ENCODE measurements at regions of chr4 and their contacts with region 1.

Region 1: GRCh38 chr4:121192480-121192879 is 28.4 kb upstream of the TNIP3 start:
- DNase-seq: peak; percentile 37
- H3K4me3 Mint-ChIP-seq: peak overlapping the region; percentile 9
- H3K27ac Mint-ChIP-seq: no peak overlapping the region
- H3K4me1 Mint-ChIP-seq: peaks cover 44% of the 10 kb centered on the region
- H3K27me3 Mint-ChIP-seq: no peaks in the 10 kb centered on the region

Region 2: GRCh38 chr4:120524237-120524636 is 668.2 kb before region 1 on chr4:
- CTCF ChIA-PET with region 1: no interaction called
- intact Hi-C with region 1: no loop called
- DNase-seq: no peak
- H3K4me3 Mint-ChIP-seq: no peak overlapping the region
- H3K27ac Mint-ChIP-seq: no peak overlapping the region
- H3K4me1 Mint-ChIP-seq: no peaks in the 10 kb centered on the region
- H3K27me3 Mint-ChIP-seq: no peaks in the 10 kb centered on the region

Region 3: DNA sequence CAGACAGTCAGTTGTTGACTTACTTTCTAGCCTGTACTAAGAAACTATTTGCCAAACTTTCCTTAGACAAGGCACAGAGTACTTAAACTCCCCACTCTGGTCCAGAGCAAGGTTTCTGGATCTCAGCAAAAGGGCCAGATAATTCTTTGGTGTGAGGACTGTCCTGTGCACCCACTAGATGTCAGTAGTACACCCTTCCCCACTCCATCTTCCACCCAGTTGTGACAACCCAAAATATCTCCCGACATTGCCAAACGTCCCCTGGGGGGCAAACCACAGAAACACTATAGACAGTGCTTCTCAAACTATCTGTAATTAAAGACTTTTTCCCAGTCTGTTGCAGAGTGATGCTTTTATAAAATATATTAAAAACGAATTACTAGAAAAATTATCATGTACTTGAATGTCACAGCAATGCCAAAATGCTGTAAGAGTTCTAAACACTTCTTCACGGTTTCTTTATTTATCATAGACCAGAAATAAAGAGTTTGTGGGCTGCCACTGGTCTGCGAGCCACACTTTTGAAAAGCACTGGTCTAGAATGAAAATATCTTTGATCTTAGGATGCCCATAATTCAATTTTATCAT is 473.4 kb before region 1 on chr4:
- CTCF ChIA-PET with region 1: no interaction called
- intact Hi-C with region 1: loop called (anchors 5 kb)
- DNase-seq: peak; percentile 37
- H3K4me3 Mint-ChIP-seq: no peak overlapping the region
- H3K27ac Mint-ChIP-seq: no peak overlapping the region
- H3K4me1 Mint-ChIP-seq: no peaks in the 10 kb centered on the region
- H3K27me3 Mint-ChIP-seq: peaks cover 2% of the 10 kb centered on the region

Region 4: GRCh38 chr4:121156822-121157769 is 35.4 kb before region 1 on chr4:
- CTCF ChIA-PET with region 1: interaction called, 19 read pairs
- intact Hi-C with region 1: loop called (anchors 1 kb)
- DNase-seq: peak; percentile 42
- H3K4me3 Mint-ChIP-seq: peak overlapping the region; percentile 78
- H3K27ac Mint-ChIP-seq: no peak overlapping the region
- H3K4me1 Mint-ChIP-seq: peaks cover 43% of the 10 kb centered on the region
- H3K27me3 Mint-ChIP-seq: no peaks in the 10 kb centered on the region

Region 5: DNA sequence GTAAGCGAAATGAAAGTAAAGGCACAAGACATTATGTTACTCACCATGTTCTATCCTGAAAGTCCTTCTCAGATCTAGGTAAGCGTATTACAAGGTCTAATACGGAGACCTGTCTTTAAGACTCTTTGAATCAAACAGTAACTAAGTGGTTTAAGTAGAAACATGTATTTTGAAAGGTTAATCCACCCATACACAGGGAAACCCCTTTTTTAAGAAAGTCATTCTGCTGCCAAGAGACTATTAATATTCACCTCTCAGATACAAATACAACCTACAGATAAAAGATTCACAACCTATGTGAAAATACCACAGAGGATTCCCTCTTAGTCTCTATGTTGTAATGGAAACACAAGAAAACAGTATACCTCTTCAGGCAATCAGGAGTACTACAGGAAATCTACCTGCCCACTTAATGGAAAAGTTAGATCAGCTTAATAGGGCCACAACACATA is 34.9 kb after region 1 on chr4:
- CTCF ChIA-PET with region 1: interaction called, 24 read pairs
- intact Hi-C with region 1: loop called (anchors 1 kb)
- DNase-seq: no peak
- H3K4me3 Mint-ChIP-seq: peak overlapping the region; percentile 61
- H3K27ac Mint-ChIP-seq: peak overlapping the region; percentile 77
- H3K4me1 Mint-ChIP-seq: peaks cover 56% of the 10 kb centered on the region
- H3K27me3 Mint-ChIP-seq: no peaks in the 10 kb centered on the region

Region 6: GRCh38 chr4:121272526-121272925 is 80.0 kb after region 1 on chr4:
- CTCF ChIA-PET with region 1: interaction called, 14 read pairs
- intact Hi-C with region 1: no loop called
- DNase-seq: no peak
- H3K4me3 Mint-ChIP-seq: no peak overlapping the region
- H3K27ac Mint-ChIP-seq: no peak overlapping the region
- H3K4me1 Mint-ChIP-seq: peaks cover 6% of the 10 kb centered on the region
- H3K27me3 Mint-ChIP-seq: peaks cover 1% of the 10 kb centered on the region

Region 7: GRCh38 chr4:121370729-121371325 is 178.3 kb after region 1 on chr4:
- CTCF ChIA-PET with region 1: interaction called, 9 read pairs
- intact Hi-C with region 1: loop called (anchors 2 kb)
- DNase-seq: peak; percentile 66
- H3K4me3 Mint-ChIP-seq: no peak overlapping the region
- H3K27ac Mint-ChIP-seq: no peak overlapping the region
- H3K4me1 Mint-ChIP-seq: no peaks in the 10 kb centered on the region
- H3K27me3 Mint-ChIP-seq: peaks cover 9% of the 10 kb centered on the region

Region 8: DNA sequence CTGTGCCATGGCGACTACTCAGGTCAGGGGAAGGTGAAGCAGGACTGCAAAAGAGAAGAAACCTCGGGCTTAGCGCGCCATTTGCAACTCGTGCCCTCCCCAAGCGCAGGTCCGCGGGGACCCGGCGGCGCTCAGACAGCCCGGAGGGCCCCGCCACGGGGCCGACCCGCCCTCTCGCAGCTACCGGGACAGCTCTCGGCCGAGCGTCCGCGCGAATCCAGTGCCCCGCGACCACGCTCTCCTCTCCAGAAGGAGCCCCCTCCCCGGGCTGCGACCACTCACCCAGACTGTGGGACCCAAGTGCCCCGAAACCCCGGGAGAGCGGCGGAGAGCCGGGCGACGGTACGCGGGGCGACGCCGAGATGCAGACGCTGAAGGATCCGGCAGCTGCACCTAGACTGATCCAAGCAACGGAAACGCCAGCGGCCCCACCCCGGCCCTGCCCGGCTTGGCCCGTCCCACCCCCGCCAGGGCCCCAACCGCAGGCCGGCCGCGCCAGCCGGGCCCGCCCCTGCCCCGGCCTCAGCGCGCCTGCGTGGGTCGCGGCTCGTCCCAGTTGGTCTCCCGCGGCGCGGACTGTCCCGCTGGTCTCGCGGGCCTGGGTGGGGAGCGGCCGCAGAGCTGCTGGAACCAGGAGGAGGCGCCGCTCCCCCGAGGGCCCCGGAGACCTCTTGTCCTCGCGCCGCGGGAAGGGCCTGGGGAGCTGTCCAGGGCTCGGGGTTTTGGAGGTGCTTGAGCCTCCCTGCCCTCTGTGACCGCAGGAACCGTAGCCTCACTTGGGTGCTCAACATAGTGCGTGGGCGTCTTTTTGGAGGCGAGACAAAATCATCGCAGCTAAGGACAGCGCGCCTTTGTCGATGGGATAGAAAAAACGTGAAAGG is 504.3 kb after region 1 on chr4 and contains the start of gene ANXA5:
- CTCF ChIA-PET with region 1: no interaction called
- intact Hi-C with region 1: loop called (anchors 5 kb)
- DNase-seq: peak; percentile 79
- H3K4me3 Mint-ChIP-seq: peak within 1 kb of the TSS; percentile 93
- H3K27ac Mint-ChIP-seq: peak within 1 kb of the TSS; percentile 91
- H3K4me1 Mint-ChIP-seq: peaks cover 11% of the 10 kb centered on the region
- H3K27me3 Mint-ChIP-seq: peaks cover 14% of the 10 kb centered on the region
- total RNA-seq, gene ANXA5: 98.4 to 99.5 TPM